Common myeloid progenitor, CD34-positive (primary cell): ENCODE measurements at regions of chr17 and their contacts with region 1.

Region 1: DNA sequence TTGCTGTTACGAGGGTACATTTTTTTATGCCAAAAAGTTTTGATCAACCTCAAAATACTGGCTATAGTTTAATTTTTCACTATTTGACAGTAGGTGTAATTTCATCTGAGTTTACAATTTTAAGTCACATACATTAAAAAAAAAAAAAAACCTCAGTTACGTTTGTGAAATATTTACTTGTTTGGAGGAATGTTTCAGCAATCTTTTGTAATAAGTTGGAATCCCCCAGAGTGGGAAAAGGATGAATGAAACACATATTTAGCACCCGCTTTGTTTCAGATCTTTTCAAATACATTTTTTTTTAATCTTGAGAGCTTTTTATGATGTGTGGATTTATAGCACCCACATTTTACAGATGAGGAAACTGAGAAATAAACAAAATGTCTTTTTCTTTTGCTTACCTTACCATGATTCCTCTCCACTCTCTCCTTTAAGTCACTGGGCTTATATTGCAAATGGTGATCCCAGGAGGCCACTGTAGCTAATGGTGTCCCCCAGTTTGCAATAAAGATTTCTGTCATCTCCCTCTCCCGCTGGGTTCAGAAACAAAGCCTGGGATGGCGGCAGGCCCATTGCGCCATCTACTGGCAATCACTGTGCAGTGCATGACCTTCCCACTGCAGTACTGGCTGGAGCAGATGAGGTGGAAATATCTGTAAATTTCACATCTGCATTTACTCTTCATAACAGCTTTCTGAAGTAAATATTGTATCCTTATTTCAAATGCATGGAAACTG is 27.7 kb downstream of the TBC1D3B start:
- DNase-seq: peak; percentile 74 to 85 (median 84)
- H3K4me3 ChIP-seq: peak overlapping the region in 4 of 7 experiments; percentile 4 to 66 (median 52)
- H3K27ac ChIP-seq: peak overlapping the region in 1 of 2 experiments; percentile 35
- H3K4me1 ChIP-seq: peaks cover 0 to 23% (median 10%) of the 10 kb centered on the region in 4 experiments
- H3K27me3 ChIP-seq: no peaks in the 10 kb centered on the region

Region 2: GRCh38 chr17:35903077-35903850 is 245.5 kb before region 1 on chr17:
- CTCF ChIA-PET with region 1: no interaction called
- POLR2A ChIA-PET with region 1: no interaction called
- DNase-seq: no peak
- H3K4me3 ChIP-seq: no peak overlapping the region
- H3K27ac ChIP-seq: no peak overlapping the region
- H3K4me1 ChIP-seq: peaks cover 0 to 20% (median 10%) of the 10 kb centered on the region in 4 experiments
- H3K27me3 ChIP-seq: no peaks in the 10 kb centered on the region

Region 3: DNA sequence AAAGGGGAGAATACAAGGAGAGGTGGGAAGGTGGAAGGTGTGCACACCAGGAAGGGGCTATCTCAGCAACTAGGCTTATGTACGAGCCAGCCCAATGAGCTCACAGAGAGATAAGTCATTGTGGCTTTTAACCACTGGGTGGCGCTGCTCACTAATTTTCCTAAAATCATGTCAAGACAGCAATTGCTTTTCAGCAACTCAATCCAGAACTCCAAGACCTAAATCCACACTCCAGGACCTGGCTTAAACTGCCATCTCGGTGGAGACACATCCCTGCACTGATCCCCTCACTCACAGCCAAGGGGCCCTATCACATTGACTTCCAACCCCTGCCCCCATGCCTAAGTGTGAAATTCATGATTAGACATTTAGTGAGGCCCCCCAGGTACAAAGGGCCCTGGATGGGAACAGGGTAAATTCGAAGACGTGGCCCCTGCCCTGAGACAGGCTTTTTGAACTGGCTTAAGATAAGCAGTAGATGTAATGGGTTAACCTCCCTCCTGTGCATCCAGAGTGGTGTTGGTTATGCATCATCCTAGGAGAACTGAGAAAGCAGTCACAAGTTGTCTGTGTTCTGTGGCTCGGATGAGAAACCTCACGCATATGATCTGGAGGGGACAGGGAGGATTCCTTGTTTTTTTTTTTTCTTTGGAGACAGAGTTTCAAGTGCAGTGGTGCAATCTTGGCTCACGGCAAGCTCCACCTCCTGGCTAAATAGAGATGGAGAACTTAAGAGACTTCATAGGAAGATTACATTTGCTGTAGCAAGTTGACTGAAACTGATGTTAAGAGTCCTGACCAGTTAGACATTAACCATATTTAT is 179.0 kb before region 1 on chr17:
- CTCF ChIA-PET with region 1: interaction called, 370 read pairs
- POLR2A ChIA-PET with region 1: no interaction called
- DNase-seq: peak; percentile 78 to 87 (median 79)
- H3K4me3 ChIP-seq: no peak overlapping the region
- H3K27ac ChIP-seq: no peak overlapping the region
- H3K4me1 ChIP-seq: peaks cover 0 to 6% (median 3%) of the 10 kb centered on the region in 4 experiments
- H3K27me3 ChIP-seq: no peaks in the 10 kb centered on the region

Region 4: GRCh38 chr17:36004594-36005108 is 144.1 kb before region 1 on chr17:
- CTCF ChIA-PET with region 1: interaction called, 17 read pairs
- POLR2A ChIA-PET with region 1: no interaction called
- DNase-seq: peak; percentile 9 to 63 (median 37)
- H3K4me3 ChIP-seq: no peak overlapping the region
- H3K27ac ChIP-seq: peak overlapping the region in 1 of 2 experiments; percentile 55
- H3K4me1 ChIP-seq: peaks cover 2 to 13% (median 4%) of the 10 kb centered on the region in 4 experiments
- H3K27me3 ChIP-seq: no peaks in the 10 kb centered on the region

Region 5: GRCh38 chr17:36048066-36048465 is 100.7 kb before region 1 on chr17:
- CTCF ChIA-PET with region 1: no interaction called
- POLR2A ChIA-PET with region 1: no interaction called
- DNase-seq: peak in 1 of 3 donors; percentile 40
- H3K4me3 ChIP-seq: no peak overlapping the region
- H3K27ac ChIP-seq: no peak overlapping the region
- H3K4me1 ChIP-seq: no peaks in the 10 kb centered on the region
- H3K27me3 ChIP-seq: no peaks in the 10 kb centered on the region

Region 6: DNA sequence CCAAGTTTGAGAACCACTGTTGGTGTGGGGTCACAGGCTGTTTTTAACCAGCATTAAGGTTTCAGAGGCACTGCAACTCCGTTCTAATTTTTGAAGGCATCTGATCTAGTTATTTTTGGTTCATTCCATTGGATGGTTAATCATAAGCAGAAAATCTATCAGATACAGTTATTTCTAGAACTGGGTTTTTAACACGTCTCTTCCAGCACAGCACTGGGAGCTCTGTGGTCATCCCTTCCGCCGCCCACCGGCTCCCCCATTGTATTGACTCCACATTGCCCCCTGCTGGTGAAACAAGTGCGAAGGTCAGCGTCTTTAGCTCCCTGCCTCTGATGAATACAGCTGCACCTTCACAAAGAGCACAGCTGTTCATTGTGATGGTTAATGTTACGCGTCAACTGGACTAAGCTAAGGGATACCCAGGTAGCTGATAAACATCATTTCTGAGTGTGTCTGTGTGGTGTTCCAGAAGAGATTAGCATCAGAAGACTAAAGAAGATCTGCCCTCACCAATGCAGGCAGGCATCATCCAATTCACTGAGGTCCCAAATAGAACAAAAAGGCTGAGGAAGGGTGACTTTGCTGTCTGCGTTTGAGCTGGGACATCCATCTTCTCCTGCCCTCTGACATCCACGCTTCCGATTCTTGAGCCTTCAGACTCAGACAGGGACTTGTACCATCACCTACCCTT is 76.2 kb before region 1 on chr17:
- CTCF ChIA-PET with region 1: interaction called, 39 read pairs
- POLR2A ChIA-PET with region 1: no interaction called
- DNase-seq: peak; percentile 50 to 58 (median 57)
- H3K4me3 ChIP-seq: no peak overlapping the region
- H3K27ac ChIP-seq: no peak overlapping the region
- H3K4me1 ChIP-seq: peaks cover 0 to 7% (median 0%) of the 10 kb centered on the region in 4 experiments
- H3K27me3 ChIP-seq: no peaks in the 10 kb centered on the region

Region 7: DNA sequence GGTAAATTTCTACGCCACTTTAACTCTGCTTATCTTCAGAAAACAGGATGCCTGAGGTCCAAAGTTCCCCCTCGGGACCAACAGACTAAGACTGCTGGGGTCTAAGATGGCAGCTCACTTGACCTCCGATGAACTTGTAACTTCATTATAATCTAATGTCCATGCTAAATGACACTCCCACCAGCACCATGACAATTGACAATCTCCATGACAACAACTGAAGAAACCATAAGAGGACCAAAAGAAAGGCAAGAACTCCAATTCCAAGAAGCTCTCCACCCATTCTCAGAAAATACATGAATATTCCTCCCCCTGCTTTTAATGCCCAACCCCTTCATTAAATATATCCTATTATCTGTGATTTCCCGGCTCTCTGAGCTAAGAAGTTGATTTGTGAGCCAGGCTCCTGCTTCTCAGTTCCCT is 37.6 kb before region 1 on chr17:
- CTCF ChIA-PET with region 1: interaction called, 25 read pairs
- POLR2A ChIA-PET with region 1: no interaction called
- DNase-seq: peak in 2 of 3 donors; percentile 38 to 53
- H3K4me3 ChIP-seq: no peak overlapping the region
- H3K27ac ChIP-seq: no peak overlapping the region
- H3K4me1 ChIP-seq: peaks cover 0 to 3% (median 0%) of the 10 kb centered on the region in 4 experiments
- H3K27me3 ChIP-seq: peaks cover 0 to 4% (median 0%) of the 10 kb centered on the region in 5 experiments

Region 8: GRCh38 chr17:36117505-36118382 is 31.0 kb before region 1 on chr17:
- CTCF ChIA-PET with region 1: interaction called, 187 read pairs
- POLR2A ChIA-PET with region 1: no interaction called
- DNase-seq: no peak
- H3K4me3 ChIP-seq: no peak overlapping the region
- H3K27ac ChIP-seq: no peak overlapping the region
- H3K4me1 ChIP-seq: no peaks in the 10 kb centered on the region
- H3K27me3 ChIP-seq: no peaks in the 10 kb centered on the region

Region 9: DNA sequence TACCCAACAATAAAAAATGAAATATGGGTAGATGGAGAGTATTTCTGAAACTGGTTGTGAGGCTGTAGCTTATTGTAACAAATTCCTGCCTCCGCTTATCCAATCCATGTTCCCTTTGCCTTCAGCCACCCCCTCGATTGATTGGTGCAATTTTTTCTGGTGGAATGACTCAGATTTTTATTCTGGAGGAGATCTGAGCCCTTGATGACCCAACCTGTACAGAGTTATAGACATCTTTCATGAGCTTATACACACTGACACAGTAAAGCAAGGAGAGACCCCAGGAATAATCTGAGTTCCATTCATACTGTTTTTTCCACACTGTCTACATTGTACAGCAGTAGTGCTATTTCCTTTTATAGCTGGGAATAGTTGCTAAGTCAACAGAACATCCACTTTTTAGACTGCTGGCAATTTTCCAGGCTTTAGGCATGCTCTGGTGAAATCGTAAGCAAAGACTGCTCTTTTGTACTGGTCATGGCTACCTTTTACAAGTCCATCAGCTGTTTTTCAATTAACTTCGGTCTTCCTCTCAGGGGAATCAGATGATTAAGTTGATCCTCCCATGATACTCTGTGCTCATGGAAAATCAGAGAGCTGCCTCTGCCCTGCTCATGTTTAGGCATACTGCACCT is 15.0 kb before region 1 on chr17:
- CTCF ChIA-PET with region 1: interaction called, 187 read pairs
- POLR2A ChIA-PET with region 1: no interaction called
- DNase-seq: no peak
- H3K4me3 ChIP-seq: no peak overlapping the region
- H3K27ac ChIP-seq: no peak overlapping the region
- H3K4me1 ChIP-seq: peaks cover 0 to 11% (median 4%) of the 10 kb centered on the region in 4 experiments
- H3K27me3 ChIP-seq: peaks cover 0 to 2% (median 0%) of the 10 kb centered on the region in 5 experiments

Region 10: DNA sequence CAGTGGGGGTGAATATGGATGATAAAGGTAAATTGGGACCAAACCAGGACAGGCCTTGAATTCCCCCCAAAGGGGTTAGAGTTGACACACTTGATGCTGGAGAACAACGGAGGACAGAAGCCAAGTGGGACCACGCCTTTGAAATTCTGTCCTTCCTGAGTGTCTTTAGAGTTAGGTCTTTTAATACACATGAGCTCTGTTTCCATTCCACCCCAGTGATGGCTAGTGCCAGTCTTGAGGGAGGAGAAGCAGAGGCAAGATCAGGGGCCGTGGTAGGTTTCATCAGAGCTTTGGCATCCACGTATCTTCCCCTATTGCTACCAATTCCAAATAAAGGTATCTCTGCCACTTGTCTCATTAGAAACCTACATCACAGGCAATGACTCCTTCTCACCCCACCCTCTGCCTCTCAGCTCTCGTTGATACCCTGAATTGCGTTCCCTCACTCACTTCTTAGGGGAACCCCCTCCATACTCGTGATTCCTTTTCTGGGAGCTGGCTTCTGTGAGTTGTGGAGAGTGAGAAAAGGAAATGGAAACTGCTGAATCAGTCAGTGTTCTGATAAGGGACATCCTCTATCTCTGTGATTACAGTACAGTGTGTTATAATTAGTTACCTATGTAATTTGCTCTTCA is 50.2 kb after region 1 on chr17:
- CTCF ChIA-PET with region 1: no interaction called
- POLR2A ChIA-PET with region 1: no interaction called
- DNase-seq: peak in 2 of 3 donors; percentile 72 to 83
- H3K4me3 ChIP-seq: peak overlapping the region in 1 of 7 experiments; percentile 55
- H3K27ac ChIP-seq: no peak overlapping the region
- H3K4me1 ChIP-seq: peaks cover 26 to 76% (median 63%) of the 10 kb centered on the region in 4 experiments
- H3K27me3 ChIP-seq: no peaks in the 10 kb centered on the region